HepG2 (cell line): ENCODE measurements at regions of chr11 and their contacts with region 1.

Region 1: GRCh38 chr11:66906061-66906735 is 49.3 kb downstream of the LRFN4 start:
- DNase-seq: peak; percentile 81
- ATAC-seq: peak; percentile 45
- H3K4me3 ChIP-seq: peak overlapping the region; percentile 47 to 70 (median 60)
- H3K27ac ChIP-seq: peak overlapping the region; percentile 89
- H3K4me1 ChIP-seq: peaks cover 95% of the 10 kb centered on the region
- H3K27me3 ChIP-seq: no peaks in the 10 kb centered on the region
- CTCF ChIP-seq: no peak
- EP300 ChIP-seq: 0 out of 4 replicates have a peak, but pooled peaks of 1 of the 2 experiments have one; percentile 20
- POLR2A ChIP-seq: peak in 1 of 2 experiments; percentile 58; a peak in 3 of 4 replicates
- RAD21 ChIP-seq: no peak

Region 2: DNA sequence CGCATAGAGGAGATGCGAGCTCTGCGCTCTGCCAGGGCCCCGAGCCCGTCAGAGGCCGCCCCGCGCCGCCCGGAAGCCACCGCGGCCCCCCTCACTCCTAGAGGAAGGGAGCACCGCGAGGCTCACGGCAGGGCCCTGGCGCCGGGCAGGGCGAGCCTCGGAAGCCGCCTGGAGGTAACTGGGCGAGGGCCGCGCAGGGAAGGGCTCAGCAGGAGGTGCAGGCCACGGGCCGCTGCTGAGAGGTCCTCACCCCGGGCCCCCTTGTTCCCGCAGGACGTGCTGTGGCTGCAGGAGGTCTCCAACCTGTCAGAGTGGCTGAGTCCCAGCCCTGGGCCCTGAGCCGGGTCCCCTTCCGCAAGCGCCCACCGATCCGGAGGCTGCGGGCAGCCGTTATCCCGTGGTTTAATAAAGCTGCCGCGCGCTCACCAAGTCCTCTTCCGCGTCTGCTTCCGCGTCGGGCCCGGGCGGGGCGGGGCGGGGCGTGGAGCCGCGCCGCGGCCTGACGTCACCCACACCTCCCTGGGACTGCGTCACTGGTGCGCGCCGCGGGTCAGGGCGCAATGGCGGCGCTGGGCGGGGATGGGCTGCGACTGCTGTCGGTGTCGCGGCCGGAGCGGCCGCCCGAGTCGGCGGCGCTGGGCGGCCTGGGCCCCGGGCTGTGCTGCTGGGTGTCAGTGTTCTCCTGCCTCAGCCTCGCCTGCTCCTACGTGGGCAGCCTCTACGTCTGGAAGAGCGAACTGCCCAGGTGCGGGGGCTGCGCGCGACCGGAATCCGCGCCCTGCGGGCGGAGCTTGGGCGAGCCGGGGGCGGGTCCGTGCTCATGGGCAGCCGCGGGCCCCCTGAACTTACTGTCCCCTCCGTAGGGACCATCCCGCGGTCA is 63.1 kb before region 1 on chr11 and contains the start of gene RCE1:
- CTCF ChIA-PET with region 1: no interaction called
- POLR2A ChIA-PET with region 1: interaction called, 12 read pairs
- in situ Hi-C with region 1: no loop called
- intact Hi-C with region 1: no loop called
- DNase-seq: peak; percentile 71
- ATAC-seq: peak; percentile 78
- H3K4me3 ChIP-seq: peak within 1 kb of the TSS; percentile 87 to 99 (median 87)
- H3K27ac ChIP-seq: peak within 1 kb of the TSS; percentile 82
- H3K4me1 ChIP-seq: peaks cover 28% of the 10 kb centered on the region
- H3K27me3 ChIP-seq: no peaks in the 10 kb centered on the region; a peak in 1 of 5 replicates
- CTCF ChIP-seq: no peak
- EP300 ChIP-seq: peak; percentile 21 to 47; a peak in 1 of 4 replicates
- POLR2A ChIP-seq: peak; percentile 87 to 92
- RAD21 ChIP-seq: peak; percentile 40; the same call in 1 of the 2 replicates
- total RNA-seq, gene RCE1: 8.0 and 22.2 TPM in 2 replicates

Region 3: DNA sequence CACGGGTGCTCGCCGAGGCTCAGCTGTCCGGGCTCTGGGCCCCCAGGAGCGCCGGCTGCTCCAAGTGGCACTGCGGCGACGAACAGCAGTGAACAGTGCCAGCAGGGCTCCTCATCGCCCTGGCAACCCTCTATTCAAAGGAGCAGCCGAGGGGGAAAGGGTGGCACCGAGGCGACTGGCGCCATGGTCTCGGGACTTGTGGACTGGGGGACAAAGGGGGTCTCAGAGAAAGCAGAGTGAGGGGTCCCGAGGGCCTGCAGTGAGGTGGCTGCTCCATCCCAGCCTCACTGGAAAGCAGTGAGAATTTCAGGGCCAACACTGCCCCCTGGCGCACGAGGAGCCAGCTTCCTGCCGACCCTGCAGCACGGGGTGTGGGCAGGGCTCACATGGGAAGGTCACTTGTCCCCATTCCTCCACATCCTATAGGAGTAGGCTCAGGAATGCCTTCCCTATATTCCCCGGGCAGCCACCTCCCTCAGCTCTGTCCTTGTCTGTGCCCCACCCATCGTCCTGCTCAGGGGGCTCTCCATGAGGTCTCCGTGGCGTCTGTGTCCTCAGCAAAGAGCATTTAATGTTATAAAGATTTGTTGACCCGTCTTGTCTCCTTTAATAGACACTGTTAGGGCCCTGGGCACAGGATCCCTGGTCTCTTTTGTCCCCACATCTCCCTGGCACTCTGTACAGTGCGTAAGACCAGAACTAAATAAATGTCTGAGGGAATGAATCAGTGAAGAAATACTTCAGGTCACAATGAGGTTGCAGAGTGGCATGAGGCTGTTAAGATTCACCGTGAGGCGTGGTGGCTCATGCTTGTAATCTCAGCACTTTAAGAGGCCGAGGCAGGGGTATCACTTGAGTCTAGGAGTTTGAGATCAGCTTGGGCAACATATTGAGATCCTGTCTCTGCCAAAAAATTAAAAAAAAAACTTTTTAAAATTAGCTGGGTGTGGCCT is 22.9 kb before region 1 on chr11:
- CTCF ChIA-PET with region 1: no interaction called
- POLR2A ChIA-PET with region 1: interaction called, 12 read pairs
- in situ Hi-C with region 1: no loop called
- intact Hi-C with region 1: no loop called
- DNase-seq: peak; percentile 45
- ATAC-seq: peak; percentile 76
- H3K4me3 ChIP-seq: no peak overlapping the region
- H3K27ac ChIP-seq: no peak overlapping the region
- H3K4me1 ChIP-seq: peaks cover 29% of the 10 kb centered on the region
- H3K27me3 ChIP-seq: no peaks in the 10 kb centered on the region
- CTCF ChIP-seq: peak; percentile 73
- EP300 ChIP-seq: no peak
- POLR2A ChIP-seq: no peak
- RAD21 ChIP-seq: peak; percentile 67

Region 4: GRCh38 chr11:66891851-66892660 is 14.1 kb before region 1 on chr11:
- CTCF ChIA-PET with region 1: no interaction called
- POLR2A ChIA-PET with region 1: interaction called, 18 read pairs
- in situ Hi-C with region 1: no loop called
- intact Hi-C with region 1: no loop called
- DNase-seq: peak; percentile 88
- ATAC-seq: peak; percentile 89
- H3K4me3 ChIP-seq: no peak overlapping the region
- H3K27ac ChIP-seq: peak overlapping the region; percentile 22
- H3K4me1 ChIP-seq: peaks cover 37% of the 10 kb centered on the region
- H3K27me3 ChIP-seq: no peaks in the 10 kb centered on the region
- CTCF ChIP-seq: peak; percentile 52
- EP300 ChIP-seq: peak in 1 of 2 experiments; percentile 63; a peak in 1 of 4 replicates
- POLR2A ChIP-seq: no peak
- RAD21 ChIP-seq: no peak

Region 5: DNA sequence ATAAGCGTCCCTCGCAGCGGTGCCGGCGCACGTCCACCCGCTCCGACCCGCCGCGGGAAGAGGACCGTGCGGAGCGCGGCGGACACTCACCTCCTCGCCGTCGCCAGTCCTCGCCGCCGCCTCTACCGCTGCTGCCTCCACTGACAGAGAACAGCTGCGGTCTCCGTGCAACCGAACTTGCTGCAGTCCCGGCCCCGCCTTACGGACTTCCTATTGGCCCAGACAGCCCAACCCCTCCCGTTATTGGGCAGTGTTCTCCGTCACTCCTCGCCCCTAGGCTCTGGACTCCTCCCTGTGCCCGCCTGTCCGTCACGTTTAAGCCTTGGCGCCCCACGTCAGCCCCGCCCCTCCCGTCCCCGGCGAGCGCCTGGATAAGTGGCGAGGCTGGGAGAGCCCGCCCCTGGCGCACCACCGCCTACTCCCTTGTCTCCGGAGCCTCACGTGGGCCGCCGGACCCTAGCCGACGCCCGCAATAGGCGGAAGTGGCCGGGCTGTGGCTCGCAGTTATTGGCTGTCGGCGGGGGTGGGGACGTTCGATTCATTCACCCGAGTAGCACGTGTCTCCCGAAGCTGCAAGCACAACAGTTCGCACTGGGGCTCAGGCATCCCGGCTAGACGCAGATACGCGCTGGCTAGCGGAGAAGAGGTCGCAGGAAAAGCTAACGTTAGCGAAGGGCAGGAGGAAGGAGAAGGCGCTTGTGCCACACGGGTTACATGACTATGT is 52.2 kb after region 1 on chr11 and contains the start of gene PC:
- CTCF ChIA-PET with region 1: no interaction called
- POLR2A ChIA-PET with region 1: interaction called, 15 read pairs
- in situ Hi-C with region 1: no loop called
- intact Hi-C with region 1: loop called (anchors 5 kb)
- DNase-seq: peak; percentile 98
- ATAC-seq: peak; percentile 95
- H3K4me3 ChIP-seq: peak within 1 kb of the TSS; percentile 63 to 84 (median 82)
- H3K27ac ChIP-seq: peak within 1 kb of the TSS; percentile 69
- H3K4me1 ChIP-seq: peaks cover 29% of the 10 kb centered on the region
- H3K27me3 ChIP-seq: no peaks in the 10 kb centered on the region
- CTCF ChIP-seq: peak; percentile 4; the same call in 1 of the 2 replicates
- EP300 ChIP-seq: peak in 1 of 2 experiments; percentile 27; a peak in 1 of 4 replicates
- POLR2A ChIP-seq: peak; percentile 30 to 71; a peak in 3 of 4 replicates
- RAD21 ChIP-seq: no peak
- total RNA-seq, gene PC: 32.6 and 39.0 TPM in 2 replicates

Region 6: GRCh38 chr11:66970808-66971442 is 64.7 kb after region 1 on chr11:
- CTCF ChIA-PET with region 1: no interaction called
- POLR2A ChIA-PET with region 1: interaction called, 18 read pairs
- in situ Hi-C with region 1: no loop called
- intact Hi-C with region 1: loop called (anchors 2 kb)
- DNase-seq: peak; percentile 95
- ATAC-seq: peak; percentile 84
- H3K4me3 ChIP-seq: peak overlapping the region in 1 of 3 experiments; percentile 56; a peak in 2 of 6 replicates
- H3K27ac ChIP-seq: peak overlapping the region; percentile 64
- H3K4me1 ChIP-seq: peaks cover 94% of the 10 kb centered on the region
- H3K27me3 ChIP-seq: no peaks in the 10 kb centered on the region
- CTCF ChIP-seq: no peak
- EP300 ChIP-seq: peak; percentile 72 to 89; a peak in 3 of 4 replicates
- POLR2A ChIP-seq: peak; percentile 36 to 48; a peak in 1 of 4 replicates
- RAD21 ChIP-seq: no peak

Region 7: DNA sequence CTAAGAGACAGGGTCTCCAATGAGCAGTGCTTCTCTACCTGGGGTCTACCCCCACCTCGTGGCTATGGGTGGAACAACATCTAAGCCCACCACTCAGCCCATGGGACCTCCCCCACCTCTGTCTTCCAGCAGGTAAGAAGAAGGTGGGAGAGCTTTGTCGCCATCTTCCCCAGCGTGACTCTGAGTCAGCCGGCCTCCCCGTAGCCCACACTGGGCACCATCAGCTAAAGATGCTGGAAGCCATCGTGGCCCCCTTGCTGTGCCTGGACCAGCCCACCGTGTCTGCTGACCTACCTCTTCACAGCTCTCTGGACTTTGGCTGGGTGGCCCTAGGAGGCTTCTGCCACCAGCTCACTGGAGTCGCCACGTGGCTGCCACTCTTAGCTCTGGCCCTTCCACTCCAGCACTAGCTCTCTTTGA is 69.9 kb after region 1 on chr11:
- CTCF ChIA-PET with region 1: no interaction called
- POLR2A ChIA-PET with region 1: interaction called, 18 read pairs
- in situ Hi-C with region 1: no loop called
- intact Hi-C with region 1: loop called (anchors 2 kb)
- DNase-seq: peak; percentile 35
- ATAC-seq: peak; percentile 69
- H3K4me3 ChIP-seq: peak overlapping the region in 1 of 3 experiments; percentile 36; a peak in 1 of 6 replicates
- H3K27ac ChIP-seq: no peak overlapping the region
- H3K4me1 ChIP-seq: peaks cover 53% of the 10 kb centered on the region
- H3K27me3 ChIP-seq: no peaks in the 10 kb centered on the region
- CTCF ChIP-seq: peak; percentile 94
- EP300 ChIP-seq: no peak
- POLR2A ChIP-seq: no peak
- RAD21 ChIP-seq: peak; percentile 91